ENCODE measurements at regions of chr1 and their contacts with region 1.

Region 1: GRCh38 chr1:178898401-178898800 is 27.5 kb upstream of the ANGPTL1 start:
- DNase-seq: no peak
- ATAC-seq: no peak
- H3K4me3 ChIP-seq: no peak overlapping the region
- H3K27ac ChIP-seq: no peak overlapping the region
- H3K4me1 ChIP-seq: peaks cover 0 to 7% (median 0%) of the 10 kb centered on the region in 9 donors
- H3K27me3 ChIP-seq: no peaks in the 10 kb centered on the region
- CTCF ChIP-seq: no peak

Region 2: GRCh38 chr1:178877896-178878295 is 20.5 kb before region 1 on chr1:
- intact Hi-C with region 1: loop called in 1 of 10 experiments (anchors 2 kb)
- DNase-seq: no peak
- ATAC-seq: no peak
- H3K4me3 ChIP-seq: no peak overlapping the region
- H3K27ac ChIP-seq: no peak overlapping the region
- H3K4me1 ChIP-seq: peaks cover 0 to 4% (median 0%) of the 10 kb centered on the region in 9 donors
- H3K27me3 ChIP-seq: no peaks in the 10 kb centered on the region
- CTCF ChIP-seq: no peak